ENCODE measurements at regions of chr22 and their contacts with region 1.

Region 1: GRCh38 chr22:50341977-50342650 is 1.0 kb upstream of the PPP6R2 start:
- DNase-seq: peak; percentile 83 to 96 (median 90)

Region 2: DNA sequence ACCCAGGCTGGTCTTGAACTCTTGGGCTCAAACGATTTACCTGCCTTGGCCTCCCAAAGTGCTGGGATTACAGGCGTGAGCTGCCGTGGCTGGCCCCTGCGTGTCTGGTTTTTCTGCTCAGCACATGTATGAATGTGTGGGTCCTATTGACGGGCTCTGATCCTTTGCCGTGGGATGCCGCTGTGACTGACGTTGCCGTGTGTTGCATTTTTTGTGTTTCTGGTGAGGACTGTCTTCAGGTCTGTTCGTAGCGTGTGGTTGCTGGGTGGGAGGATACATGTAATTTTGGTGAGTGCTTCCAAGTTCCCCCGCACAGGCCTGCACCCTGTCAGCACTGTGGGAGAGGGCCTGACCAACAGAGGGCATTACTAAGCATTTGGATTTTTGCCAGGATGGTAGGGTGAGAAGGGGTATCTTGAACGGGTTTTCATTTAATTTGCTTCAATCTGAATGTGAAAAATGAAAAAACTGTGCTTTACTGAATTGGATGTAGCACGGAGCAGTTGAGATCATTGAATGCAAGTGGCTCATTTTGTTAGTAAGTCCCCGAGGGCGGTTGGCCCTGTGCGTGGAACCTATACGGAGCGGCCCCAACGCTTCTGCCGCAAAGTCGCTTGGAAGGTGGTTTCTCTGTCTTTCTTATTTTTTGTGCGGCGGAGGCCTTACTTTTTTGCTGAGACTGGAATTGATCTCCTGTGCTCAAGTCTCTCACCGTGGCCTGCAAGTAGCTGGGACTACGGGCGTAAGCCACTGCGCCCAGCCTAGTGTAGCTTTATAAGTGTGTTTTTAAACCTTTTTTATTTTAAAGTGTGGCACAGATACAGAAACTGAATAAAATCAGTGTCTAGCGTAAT is 480.2 kb before region 1 on chr22:
- intact Hi-C with region 1: no loop called
- DNase-seq: peak in 2 of 42 donors; percentile 7 to 26

Region 3: GRCh38 chr22:50244420-50245213 is 97.5 kb before region 1 on chr22 and contains the start of gene TUBGCP6:
- intact Hi-C with region 1: loop called (anchors 5 kb)
- DNase-seq: peak; percentile 90 to 99 (median 97)

Region 4: DNA sequence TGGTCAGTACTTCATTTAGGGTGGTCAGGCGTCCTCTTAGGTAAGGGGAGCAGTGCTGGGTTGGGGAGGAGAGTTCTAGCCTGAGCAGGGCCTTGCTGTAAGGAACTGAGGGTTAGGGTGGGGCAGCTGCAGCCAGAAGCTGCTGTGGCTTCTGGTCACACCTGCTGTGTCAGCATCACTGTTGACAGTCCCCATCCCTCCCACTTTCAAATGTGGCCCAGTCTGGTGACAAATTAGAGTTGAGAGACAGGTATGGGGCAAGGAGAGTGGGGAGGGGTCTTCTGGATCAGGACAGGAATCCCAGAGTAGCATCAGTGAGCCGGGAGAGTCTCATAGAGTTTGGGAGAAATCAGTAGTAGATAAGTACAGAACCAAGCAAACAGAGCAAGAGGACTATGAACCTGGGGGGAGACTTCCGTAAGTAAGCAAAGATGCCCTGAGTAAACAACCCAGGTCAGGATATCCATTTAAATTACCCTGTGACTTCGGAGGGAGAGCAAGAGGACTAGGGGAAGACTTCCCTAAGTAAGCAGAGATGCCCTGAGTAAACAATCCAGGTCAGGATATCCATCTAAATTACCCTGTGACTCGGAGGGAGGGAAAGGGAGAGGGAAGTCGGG is 54.7 kb after region 1 on chr22:
- intact Hi-C with region 1: no loop called
- DNase-seq: no peak